AG04450 (cell line): ENCODE measurements at regions of chr21 and their contacts with region 1.

Region 1: GRCh38 chr21:26732432-26733221 is 112.6 kb downstream of the ADAMTS1 start:
- DNase-seq: peak; percentile 13
- H3K4me3 ChIP-seq: no peak overlapping the region
- H3K27ac ChIP-seq: no peak overlapping the region
- H3K27me3 ChIP-seq: no peaks in the 10 kb centered on the region
- CTCF ChIP-seq: peak; percentile 71

Region 2: GRCh38 chr21:25214676-25215075 is 1518.0 kb before region 1 on chr21:
- CTCF ChIA-PET with region 1: no interaction called
- POLR2A ChIA-PET with region 1: interaction called, 10 read pairs
- DNase-seq: no peak
- H3K4me3 ChIP-seq: no peak overlapping the region
- H3K27ac ChIP-seq: no peak overlapping the region
- H3K27me3 ChIP-seq: no peaks in the 10 kb centered on the region
- CTCF ChIP-seq: no peak

Region 3: DNA sequence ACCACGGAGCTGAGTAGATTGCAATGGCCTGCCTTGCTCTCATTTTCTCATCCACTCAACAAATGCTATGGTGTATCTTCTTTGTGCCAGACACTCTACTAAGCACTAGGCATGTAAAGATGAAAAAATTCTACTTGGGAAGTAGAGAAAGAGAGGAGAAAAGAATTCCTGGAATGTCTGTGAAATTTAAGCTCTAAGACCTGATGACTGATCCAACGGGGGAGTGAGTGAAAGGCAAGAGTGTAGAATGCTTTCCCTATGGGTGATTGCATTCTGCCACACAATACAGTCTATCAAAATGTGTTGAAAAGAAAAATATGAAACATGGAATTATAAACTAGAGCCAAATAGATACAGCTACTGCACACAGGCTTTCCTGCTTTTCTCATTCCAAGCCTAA is 241.9 kb before region 1 on chr21:
- CTCF ChIA-PET with region 1: no interaction called
- POLR2A ChIA-PET with region 1: no interaction called
- DNase-seq: no peak
- H3K4me3 ChIP-seq: no peak overlapping the region
- H3K27ac ChIP-seq: no peak overlapping the region
- H3K27me3 ChIP-seq: no peaks in the 10 kb centered on the region
- CTCF ChIP-seq: no peak

Region 4: GRCh38 chr21:26659182-26659581 is 73.4 kb before region 1 on chr21:
- CTCF ChIA-PET with region 1: no interaction called
- POLR2A ChIA-PET with region 1: no interaction called
- DNase-seq: no peak
- H3K4me3 ChIP-seq: no peak overlapping the region
- H3K27ac ChIP-seq: no peak overlapping the region
- H3K27me3 ChIP-seq: no peaks in the 10 kb centered on the region
- CTCF ChIP-seq: no peak

Region 5: GRCh38 chr21:26686278-26686677 is 46.3 kb before region 1 on chr21:
- CTCF ChIA-PET with region 1: no interaction called
- POLR2A ChIA-PET with region 1: no interaction called
- DNase-seq: no peak
- H3K4me3 ChIP-seq: no peak overlapping the region; the same call in 1 of the 2 replicates
- H3K27ac ChIP-seq: no peak overlapping the region
- H3K27me3 ChIP-seq: peaks cover 2% of the 10 kb centered on the region
- CTCF ChIP-seq: no peak

Region 6: DNA sequence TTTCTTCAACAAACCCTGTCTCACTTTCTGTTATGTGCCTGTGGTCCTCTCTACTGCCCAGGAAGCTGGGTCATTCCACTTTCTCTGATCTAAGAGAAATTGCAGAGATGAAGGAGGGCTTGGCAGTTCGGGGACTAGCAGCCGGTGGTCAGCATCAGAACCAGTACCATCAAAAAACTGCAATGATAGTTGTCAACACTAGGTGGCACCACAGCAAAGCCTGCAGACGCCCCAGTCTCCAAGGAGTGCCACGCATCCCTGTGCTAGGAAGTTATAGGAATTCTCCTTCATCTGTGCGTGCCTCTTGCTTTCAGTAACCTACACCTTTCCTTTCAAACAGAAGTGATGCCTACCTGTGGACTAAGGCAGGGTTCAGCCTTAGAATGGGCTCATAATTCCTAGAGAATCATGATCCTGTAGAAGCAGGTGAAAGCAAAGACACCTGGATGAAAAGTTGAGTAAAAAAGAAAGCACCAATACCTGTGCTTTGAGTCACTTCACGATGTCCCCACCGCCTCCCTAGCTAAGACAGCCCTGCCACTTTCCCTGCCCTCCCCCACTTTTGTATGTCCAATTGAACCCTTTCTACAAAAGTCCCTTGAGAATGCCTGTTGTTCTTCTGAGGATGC is 16.6 kb before region 1 on chr21:
- CTCF ChIA-PET with region 1: interaction called, 11 read pairs
- POLR2A ChIA-PET with region 1: no interaction called
- DNase-seq: peak; percentile 16
- H3K4me3 ChIP-seq: no peak overlapping the region
- H3K27ac ChIP-seq: no peak overlapping the region
- H3K27me3 ChIP-seq: no peaks in the 10 kb centered on the region
- CTCF ChIP-seq: peak; percentile 85